Pancreas (tissue), 10 donors: ENCODE measurements at regions of chr3 and their contacts with region 1.

Region 1: GRCh38 chr3:124995460-124995994 is 60.3 kb downstream of the HEG1 start:
- DNase-seq: peak in 3 of 6 donors; percentile 25 to 45 (median 37)
- ATAC-seq: peak; percentile 46 to 83 (median 76)
- H3K4me3 ChIP-seq: no peak overlapping the region
- H3K27ac ChIP-seq: no peak overlapping the region
- H3K4me1 ChIP-seq: peaks cover 15 to 21% (median 18%) of the 10 kb centered on the region in 3 donors
- H3K27me3 ChIP-seq: no peaks in the 10 kb centered on the region
- CTCF ChIP-seq: peak in 3 of 4 donors; percentile 27 to 39 (median 32)

Region 2: DNA sequence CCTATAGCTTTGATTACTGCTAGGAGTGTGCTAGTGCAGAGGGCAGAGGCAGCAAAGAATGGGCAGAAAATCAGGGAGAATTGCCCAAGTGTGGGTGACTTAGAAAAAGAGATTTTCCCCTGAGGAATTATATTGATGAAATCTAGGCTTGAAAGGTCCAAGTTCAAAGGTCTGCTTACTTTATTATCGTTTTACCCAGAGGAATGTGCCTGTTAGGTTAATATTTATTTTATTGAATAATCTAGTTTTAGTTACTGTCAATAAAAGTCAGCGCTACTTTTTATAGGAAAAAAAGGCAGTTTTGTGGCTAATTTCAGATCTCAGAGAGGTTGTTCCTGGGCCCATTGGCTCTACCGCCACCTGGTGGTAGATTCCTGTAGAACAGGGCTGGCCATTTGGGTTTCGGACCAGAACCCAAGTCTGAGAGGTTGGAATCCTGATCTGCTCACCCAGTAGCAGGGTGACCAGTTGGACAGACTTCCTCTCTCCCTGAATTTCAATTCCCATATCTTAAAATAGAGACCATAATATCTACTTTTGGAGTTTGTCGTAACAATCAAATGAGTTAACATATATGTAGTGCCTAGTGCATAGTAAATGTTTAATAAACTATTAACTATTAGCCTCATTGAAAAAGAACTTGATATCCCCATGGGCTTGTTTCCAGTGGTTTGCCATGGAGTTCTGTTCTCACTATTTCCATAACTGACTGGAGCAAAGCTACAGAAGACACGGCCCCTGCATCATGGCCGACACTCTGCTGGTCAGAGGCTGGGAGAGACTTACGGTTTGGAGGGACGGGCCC is 442.3 kb after region 1 on chr3:
- intact Hi-C with region 1: loop called in 1 of 3 experiments (anchors 10 kb)
- DNase-seq: peak in 5 of 6 donors; percentile 26 to 80 (median 61)
- ATAC-seq: peak; percentile 44 to 74 (median 72)
- H3K4me3 ChIP-seq: no peak overlapping the region
- H3K27ac ChIP-seq: no peak overlapping the region
- H3K4me1 ChIP-seq: peaks cover 6 to 15% (median 9%) of the 10 kb centered on the region in 3 donors
- H3K27me3 ChIP-seq: no peaks in the 10 kb centered on the region
- CTCF ChIP-seq: peak; percentile 83 to 94 (median 88)